BJ (cell line): ENCODE measurements at regions of chr11 and their contacts with region 1.

Region 1: GRCh38 chr11:65779851-65780577 is 762 bp downstream of the AP5B1 start:
- DNase-seq: no peak
- H3K4me3 ChIP-seq: peak overlapping the region; percentile 98
- H3K27me3 ChIP-seq: 0 out of 2 replicates have a peak, but pooled peaks cover 1% of the 10 kb centered on the region
- CTCF ChIP-seq: peak; percentile 91

Region 2: GRCh38 chr11:65720237-65720934 is 59.6 kb before region 1 on chr11 and contains the start of gene RNASEH2C:
- CTCF ChIA-PET with region 1: interaction called, 20 read pairs
- POLR2A ChIA-PET with region 1: no interaction called
- DNase-seq: peak; percentile 30
- H3K4me3 ChIP-seq: peak within 1 kb of the TSS; percentile 60
- H3K27me3 ChIP-seq: no peaks in the 10 kb centered on the region
- CTCF ChIP-seq: no peak
- polyA plus RNA-seq, gene RNASEH2C: 28.0 and 33.9 TPM in 2 replicates

Region 3: DNA sequence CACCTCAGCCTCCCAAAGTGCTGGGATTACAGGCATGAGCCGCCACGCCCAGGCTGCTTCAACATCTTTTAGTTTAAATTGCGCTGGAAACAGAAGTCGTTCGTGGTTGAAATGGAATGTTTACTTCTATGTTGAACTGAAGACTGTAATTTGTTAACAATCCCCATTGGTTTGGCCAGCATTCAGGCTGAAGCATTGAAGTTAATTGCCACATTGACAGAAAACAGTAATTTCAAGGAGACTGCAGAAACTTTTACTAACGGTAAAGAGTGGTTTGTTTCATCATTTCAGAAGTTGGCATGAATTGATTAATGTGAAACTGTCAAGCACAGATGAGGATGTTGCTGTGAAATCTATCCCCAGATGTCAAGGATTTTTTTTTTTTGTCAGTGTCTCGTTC is 13.5 kb before region 1 on chr11:
- CTCF ChIA-PET with region 1: interaction called, 41 read pairs
- POLR2A ChIA-PET with region 1: no interaction called
- DNase-seq: no peak
- H3K4me3 ChIP-seq: no peak overlapping the region
- H3K27me3 ChIP-seq: no peaks in the 10 kb centered on the region; the same call in 1 of the 2 replicates
- CTCF ChIP-seq: no peak

Region 4: GRCh38 chr11:65791691-65792213 is 11.7 kb after region 1 on chr11:
- CTCF ChIA-PET with region 1: interaction called, 57 read pairs
- POLR2A ChIA-PET with region 1: interaction called, 3 read pairs
- DNase-seq: no peak
- H3K4me3 ChIP-seq: no peak overlapping the region
- H3K27me3 ChIP-seq: peaks cover 31% of the 10 kb centered on the region
- CTCF ChIP-seq: no peak

Region 5: DNA sequence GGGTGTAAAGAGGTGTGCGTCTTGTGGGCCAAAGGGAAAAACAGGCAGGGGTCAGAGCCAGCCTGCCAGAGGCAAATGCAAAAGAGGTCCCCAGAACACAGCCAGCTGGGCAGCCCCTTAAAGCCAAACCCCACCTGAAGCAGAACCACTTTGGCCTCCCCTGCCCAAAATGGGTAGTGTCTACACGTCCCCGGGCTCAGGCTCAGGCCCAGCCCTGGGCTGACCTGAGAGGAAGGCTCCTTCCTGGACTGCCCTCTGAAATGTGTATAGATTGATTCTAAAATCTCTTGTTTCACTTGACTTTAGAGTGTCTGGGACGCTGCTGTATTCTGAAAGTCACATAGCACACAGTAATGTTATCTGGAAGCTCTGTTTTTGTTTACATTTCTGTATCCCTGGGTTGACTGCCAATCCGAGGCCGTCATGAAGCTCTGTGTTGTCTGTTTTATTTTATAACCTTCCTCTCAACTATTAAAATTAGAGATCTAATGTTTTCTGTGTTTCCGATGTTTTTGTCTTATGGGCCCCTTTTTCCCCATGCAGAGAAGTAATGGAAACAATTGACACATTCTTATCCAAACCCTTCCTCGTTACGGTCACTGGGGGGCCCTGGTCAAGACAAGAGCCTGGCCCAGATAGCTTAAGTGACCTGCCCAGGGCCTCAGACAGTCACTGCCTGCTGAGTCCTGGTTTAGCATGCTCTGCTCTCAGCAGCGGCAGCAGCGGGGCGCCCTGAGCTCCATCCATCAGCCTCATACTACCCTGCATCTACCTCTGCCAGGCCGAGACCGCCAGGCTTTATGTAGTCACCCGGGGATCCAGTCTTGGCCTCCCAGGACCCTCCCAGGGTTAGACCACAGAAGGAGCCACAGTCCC is 16.9 kb after region 1 on chr11:
- CTCF ChIA-PET with region 1: interaction called, 57 read pairs
- POLR2A ChIA-PET with region 1: interaction called, 3 read pairs
- DNase-seq: no peak
- H3K4me3 ChIP-seq: no peak overlapping the region
- H3K27me3 ChIP-seq: peaks cover 16% of the 10 kb centered on the region
- CTCF ChIP-seq: no peak

Region 6: GRCh38 chr11:65811764-65812497 is 31.9 kb after region 1 on chr11:
- CTCF ChIA-PET with region 1: interaction called, 43 read pairs
- POLR2A ChIA-PET with region 1: no interaction called
- DNase-seq: no peak
- H3K4me3 ChIP-seq: no peak overlapping the region
- H3K27me3 ChIP-seq: peaks cover 5% of the 10 kb centered on the region; the same call in 1 of the 2 replicates
- CTCF ChIP-seq: no peak

Region 7: GRCh38 chr11:65817835-65818742 is 38.1 kb after region 1 on chr11:
- CTCF ChIA-PET with region 1: interaction called, 43 read pairs
- POLR2A ChIA-PET with region 1: no interaction called
- DNase-seq: no peak
- H3K4me3 ChIP-seq: peak overlapping the region; percentile 58
- H3K27me3 ChIP-seq: no peaks in the 10 kb centered on the region
- CTCF ChIP-seq: peak; percentile 93